ENCODE measurements at regions of chr17 and their contacts with region 1.

Region 1: GRCh38 chr17:4420692-4421131 is 13.0 kb upstream of the SPNS3 start:
- DNase-seq: peak in 1 of 2 donors; percentile 70
- ATAC-seq: peak; percentile 76 to 93 (median 90)
- H3K4me3 ChIP-seq: no peak overlapping the region
- H3K27ac ChIP-seq: no peak overlapping the region
- H3K4me1 ChIP-seq: peaks cover 0 to 5% (median 0%) of the 10 kb centered on the region in 9 donors
- H3K27me3 ChIP-seq: no peaks in the 10 kb centered on the region
- CTCF ChIP-seq: peak; percentile 75 to 90 (median 85)

Region 2: GRCh38 chr17:4199818-4200402 is 220.8 kb before region 1 on chr17:
- intact Hi-C with region 1: loop called in 1 of 10 experiments (anchors 5 kb)
- DNase-seq: no peak
- ATAC-seq: peak in 1 of 8 donors; percentile 48
- H3K4me3 ChIP-seq: no peak overlapping the region
- H3K27ac ChIP-seq: no peak overlapping the region
- H3K4me1 ChIP-seq: peaks cover 0 to 11% (median 10%) of the 10 kb centered on the region in 9 donors
- H3K27me3 ChIP-seq: no peaks in the 10 kb centered on the region
- CTCF ChIP-seq: peak; percentile 21 to 77 (median 73)

Region 3: GRCh38 chr17:4480929-4481898 is 60.5 kb after region 1 on chr17:
- intact Hi-C with region 1: loop called in 1 of 10 experiments (anchors 10 kb)
- DNase-seq: no peak
- ATAC-seq: peak in 7 of 8 donors; percentile 14 to 58 (median 41)
- H3K4me3 ChIP-seq: no peak overlapping the region
- H3K27ac ChIP-seq: peak overlapping the region in 3 of 10 donors; percentile 32 to 65 (median 35)
- H3K4me1 ChIP-seq: peaks cover 3 to 34% (median 22%) of the 10 kb centered on the region in 9 donors
- H3K27me3 ChIP-seq: no peaks in the 10 kb centered on the region
- CTCF ChIP-seq: no peak

Region 4: GRCh38 chr17:4534026-4534914 is 113.6 kb after region 1 on chr17:
- intact Hi-C with region 1: loop called in 4 of 10 experiments (anchors 5 to 10 kb)
- DNase-seq: peak in 1 of 2 donors; percentile 49
- ATAC-seq: peak in 6 of 8 donors; percentile 7 to 16 (median 11)
- H3K4me3 ChIP-seq: no peak overlapping the region
- H3K27ac ChIP-seq: peak overlapping the region; percentile 41 to 88 (median 64)
- H3K4me1 ChIP-seq: peaks cover 27 to 100% (median 90%) of the 10 kb centered on the region in 9 donors
- H3K27me3 ChIP-seq: no peaks in the 10 kb centered on the region
- CTCF ChIP-seq: peak in 1 of 9 donors; percentile 15

Region 5: GRCh38 chr17:4554997-4555799 is 134.5 kb after region 1 on chr17 and contains the start of gene MYBBP1A:
- intact Hi-C with region 1: loop called in 2 of 10 experiments (anchors 5 kb)
- DNase-seq: peak; percentile 97 to 98
- ATAC-seq: peak; percentile 89 to 98 (median 96)
- H3K4me3 ChIP-seq: peak within 1 kb of the TSS; percentile 44 to 96 (median 78)
- H3K27ac ChIP-seq: peak within 1 kb of the TSS; percentile 49 to 92 (median 88)
- H3K4me1 ChIP-seq: peaks cover 7 to 24% (median 21%) of the 10 kb centered on the region in 9 donors
- H3K27me3 ChIP-seq: no peaks in the 10 kb centered on the region
- CTCF ChIP-seq: peak in 7 of 9 donors; percentile 2 to 52 (median 39)
- total RNA-seq, gene MYBBP1A: 18.7 to 30.3 (median 21.7) TPM

Region 6: DNA sequence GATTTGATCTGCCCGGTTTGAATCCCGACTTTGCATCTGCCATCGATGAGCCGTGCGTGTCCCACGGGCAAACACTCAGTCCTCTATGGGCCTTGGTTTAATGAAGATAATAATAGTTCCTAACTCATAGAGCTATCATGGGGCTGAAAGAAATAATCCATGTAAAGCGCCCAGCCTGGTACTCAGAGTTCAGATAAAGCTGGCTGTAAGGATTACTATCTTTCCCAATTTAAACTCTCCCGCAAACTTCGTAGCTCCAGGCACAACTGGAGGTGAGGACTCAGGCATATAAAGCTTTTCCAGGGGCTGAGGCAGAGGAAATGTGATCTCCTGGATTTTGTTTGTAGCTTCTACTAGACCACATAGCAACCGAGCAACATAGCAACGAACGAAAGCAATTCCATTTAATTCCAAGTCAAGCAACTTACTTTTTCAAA is 204.5 kb after region 1 on chr17:
- intact Hi-C with region 1: loop called (anchors 2 to 10 kb)
- DNase-seq: no peak
- ATAC-seq: peak; percentile 50 to 76 (median 58)
- H3K4me3 ChIP-seq: no peak overlapping the region
- H3K27ac ChIP-seq: peak overlapping the region in 1 of 10 donors; percentile 37
- H3K4me1 ChIP-seq: peaks cover 0 to 18% (median 13%) of the 10 kb centered on the region in 9 donors
- H3K27me3 ChIP-seq: peaks cover 0 to 3% (median 0%) of the 10 kb centered on the region in 7 donors
- CTCF ChIP-seq: no peak